ENCODE measurements at regions of chr2 and their contacts with region 1.

Region 1: GRCh38 chr2:204177977-204178540 is 241.5 kb downstream of the ICOS start:
- H3K4me3 ChIP-seq: no peak overlapping the region
- H3K27ac ChIP-seq: no peak overlapping the region
- H3K4me1 ChIP-seq: no peaks in the 10 kb centered on the region
- CTCF ChIP-seq: no peak

Region 2: GRCh38 chr2:204072443-204073324 is 105.4 kb before region 1 on chr2:
- CTCF ChIA-PET with region 1: interaction called, 16 read pairs
- POLR2A ChIA-PET with region 1: no interaction called
- H3K4me3 ChIP-seq: no peak overlapping the region
- H3K27ac ChIP-seq: no peak overlapping the region
- H3K4me1 ChIP-seq: peaks cover 12% of the 10 kb centered on the region; the same call in 1 of the 2 replicates
- CTCF ChIP-seq: 0 out of 2 replicates have a peak, but pooled peaks have one; percentile 27

Region 3: DNA sequence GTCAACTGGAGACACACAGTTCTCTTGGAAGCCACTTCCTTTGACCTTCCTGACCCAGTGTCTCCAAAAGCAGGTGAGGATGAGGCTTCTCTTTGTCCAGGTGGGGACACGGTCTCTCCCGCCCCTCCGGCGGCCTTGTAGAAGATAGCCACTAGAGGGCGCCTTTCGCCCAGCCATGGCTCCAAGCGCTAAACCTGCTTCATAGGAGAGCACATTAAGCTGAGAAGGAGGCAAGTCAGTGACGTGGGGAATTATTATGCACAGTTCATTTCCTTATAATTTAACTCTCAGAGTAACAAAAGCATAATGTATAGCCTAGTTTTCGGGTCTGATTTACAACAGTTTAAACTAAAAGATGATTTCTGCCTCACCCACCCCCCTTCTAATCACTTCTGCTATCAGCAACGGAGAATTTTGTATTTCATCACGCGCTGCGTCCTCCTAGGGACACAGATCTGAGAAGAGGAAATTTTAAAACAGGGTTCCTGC is 32.8 kb before region 1 on chr2:
- CTCF ChIA-PET with region 1: interaction called, 17 read pairs
- POLR2A ChIA-PET with region 1: no interaction called
- H3K4me3 ChIP-seq: peak overlapping the region; percentile 4
- H3K27ac ChIP-seq: no peak overlapping the region
- H3K4me1 ChIP-seq: no peaks in the 10 kb centered on the region
- CTCF ChIP-seq: peak; percentile 84

Region 4: DNA sequence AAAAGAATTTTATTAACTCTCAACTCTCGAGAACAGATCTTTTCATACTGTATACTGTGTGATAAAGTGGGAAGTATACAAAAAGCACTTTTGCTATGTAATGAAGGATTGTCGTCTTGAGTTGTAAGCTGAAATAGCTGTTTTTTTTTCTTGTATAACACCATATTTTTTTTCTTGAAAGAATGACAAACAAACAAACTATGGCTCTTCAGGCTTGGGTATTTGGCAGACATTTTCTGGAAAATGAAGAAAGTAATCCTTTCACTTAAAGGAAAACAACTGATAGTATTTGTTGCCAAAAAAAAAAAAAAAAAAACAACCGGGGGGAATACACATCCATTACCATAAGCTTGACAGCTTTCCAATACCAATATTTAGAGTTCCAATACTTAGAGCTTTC is 11.1 kb before region 1 on chr2:
- CTCF ChIA-PET with region 1: interaction called, 25 read pairs
- POLR2A ChIA-PET with region 1: no interaction called
- H3K4me3 ChIP-seq: no peak overlapping the region
- H3K27ac ChIP-seq: no peak overlapping the region
- H3K4me1 ChIP-seq: no peaks in the 10 kb centered on the region
- CTCF ChIP-seq: no peak